ENCODE measurements at regions of chr14 and their contacts with region 1.

Region 1: GRCh38 chr14:24339284-24340151 is at the start of gene RIPK3:
- DNase-seq: peak; percentile 82
- ATAC-seq: peak; percentile 95
- H3K4me3 Mint-ChIP-seq: peak within 1 kb of the TSS; percentile 85
- H3K27ac Mint-ChIP-seq: peak within 1 kb of the TSS; percentile 81
- H3K4me1 Mint-ChIP-seq: peaks cover 17% of the 10 kb centered on the region
- H3K27me3 Mint-ChIP-seq: peaks cover 15% of the 10 kb centered on the region
- total RNA-seq, gene RIPK3: 8.9 to 9.4 TPM

Region 2: GRCh38 chr14:24366721-24367513 is 27.4 kb after region 1 on chr14:
- CTCF ChIA-PET with region 1: interaction called, 13 read pairs
- POLR2A ChIA-PET with region 1: no interaction called
- intact Hi-C with region 1: loop called (anchors 2 kb)
- DNase-seq: peak; percentile 47
- ATAC-seq: peak; percentile 21
- H3K4me3 Mint-ChIP-seq: peak overlapping the region; percentile 23
- H3K27ac Mint-ChIP-seq: no peak overlapping the region
- H3K4me1 Mint-ChIP-seq: peaks cover 28% of the 10 kb centered on the region
- H3K27me3 Mint-ChIP-seq: peaks cover 41% of the 10 kb centered on the region